Activated B cell treated with CpG ODN at 0.5 μM for 24 hours (primary cell): ENCODE measurements at regions of chr3 and their contacts with region 1.

Region 1: DNA sequence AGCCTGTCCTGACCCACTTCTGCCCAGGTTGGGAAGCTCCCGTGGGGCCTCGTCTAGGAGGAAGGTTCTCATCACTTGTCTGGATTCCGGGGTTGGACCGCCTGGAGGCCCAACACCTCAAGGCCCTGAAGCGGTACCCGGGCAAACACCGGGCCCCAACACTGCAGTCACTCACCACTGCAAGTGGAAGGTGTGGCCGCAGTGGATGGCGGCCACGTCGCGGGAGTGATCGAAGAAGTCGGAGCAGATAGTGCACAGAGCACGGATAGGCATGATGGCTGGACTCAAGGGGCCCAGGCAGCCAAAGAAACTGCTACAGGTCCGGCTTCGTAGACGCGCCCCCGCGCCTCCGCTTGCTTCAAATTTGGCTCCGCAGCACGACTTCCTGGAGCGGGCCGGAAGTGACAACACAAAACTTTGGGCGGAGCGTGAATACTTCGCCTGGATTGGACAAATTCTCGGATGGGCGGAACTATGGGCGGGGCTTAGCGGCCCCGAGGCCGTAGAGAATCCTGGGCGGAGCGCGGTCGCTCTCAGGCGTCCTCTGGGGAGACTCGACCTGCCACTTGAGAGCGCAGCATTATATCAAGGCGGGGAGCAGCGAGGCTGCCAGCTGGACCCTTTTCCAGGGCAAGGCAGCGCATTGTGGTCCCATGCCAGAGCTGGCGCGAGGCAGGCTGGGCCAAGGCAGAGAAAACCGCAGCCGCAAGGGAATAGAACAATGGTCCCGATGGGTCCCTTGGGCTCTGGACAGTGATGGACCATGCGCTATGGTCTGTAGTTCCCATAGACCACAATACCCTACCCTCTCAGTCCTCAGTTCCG is at the start of gene TRAIP:
- DNase-seq: peak; percentile 94
- ATAC-seq: peak; percentile 100
- H3K4me3 Mint-ChIP-seq: peak within 1 kb of the TSS; percentile 86
- H3K27ac Mint-ChIP-seq: peak within 1 kb of the TSS; percentile 80
- H3K4me1 Mint-ChIP-seq: peaks cover 15% of the 10 kb centered on the region
- H3K27me3 Mint-ChIP-seq: peaks cover 3% of the 10 kb centered on the region
- CTCF ChIP-seq: no peak
- total RNA-seq, gene TRAIP: 6.4 TPM in 2 replicates

Region 2: GRCh38 chr3:49786241-49786958 is 70.0 kb before region 1 on chr3 and contains the start of gene IP6K1:
- CTCF ChIA-PET with region 1: no interaction called
- POLR2A ChIA-PET with region 1: interaction called, 3 read pairs
- intact Hi-C with region 1: loop called (anchors 1 kb)
- DNase-seq: peak; percentile 97
- ATAC-seq: peak; percentile 99
- H3K4me3 Mint-ChIP-seq: peak within 1 kb of the TSS; percentile 91
- H3K27ac Mint-ChIP-seq: peak within 1 kb of the TSS; percentile 93
- H3K4me1 Mint-ChIP-seq: peaks cover 32% of the 10 kb centered on the region
- H3K27me3 Mint-ChIP-seq: no peaks in the 10 kb centered on the region
- CTCF ChIP-seq: no peak
- total RNA-seq, gene IP6K1: 44.3 and 47.6 TPM in 2 replicates

Region 3: GRCh38 chr3:49929331-49930240 is 73.2 kb after region 1 on chr3 and contains the start of gene MON1A:
- CTCF ChIA-PET with region 1: no interaction called
- POLR2A ChIA-PET with region 1: no interaction called
- intact Hi-C with region 1: loop called (anchors 2 kb)
- DNase-seq: peak; percentile 92
- ATAC-seq: peak; percentile 95
- H3K4me3 Mint-ChIP-seq: peak within 1 kb of the TSS; percentile 86
- H3K27ac Mint-ChIP-seq: peak within 1 kb of the TSS; percentile 79
- H3K4me1 Mint-ChIP-seq: peaks cover 16% of the 10 kb centered on the region
- H3K27me3 Mint-ChIP-seq: no peaks in the 10 kb centered on the region
- CTCF ChIP-seq: no peak
- total RNA-seq, gene MON1A: 6.3 and 7.1 TPM in 2 replicates

Region 4: DNA sequence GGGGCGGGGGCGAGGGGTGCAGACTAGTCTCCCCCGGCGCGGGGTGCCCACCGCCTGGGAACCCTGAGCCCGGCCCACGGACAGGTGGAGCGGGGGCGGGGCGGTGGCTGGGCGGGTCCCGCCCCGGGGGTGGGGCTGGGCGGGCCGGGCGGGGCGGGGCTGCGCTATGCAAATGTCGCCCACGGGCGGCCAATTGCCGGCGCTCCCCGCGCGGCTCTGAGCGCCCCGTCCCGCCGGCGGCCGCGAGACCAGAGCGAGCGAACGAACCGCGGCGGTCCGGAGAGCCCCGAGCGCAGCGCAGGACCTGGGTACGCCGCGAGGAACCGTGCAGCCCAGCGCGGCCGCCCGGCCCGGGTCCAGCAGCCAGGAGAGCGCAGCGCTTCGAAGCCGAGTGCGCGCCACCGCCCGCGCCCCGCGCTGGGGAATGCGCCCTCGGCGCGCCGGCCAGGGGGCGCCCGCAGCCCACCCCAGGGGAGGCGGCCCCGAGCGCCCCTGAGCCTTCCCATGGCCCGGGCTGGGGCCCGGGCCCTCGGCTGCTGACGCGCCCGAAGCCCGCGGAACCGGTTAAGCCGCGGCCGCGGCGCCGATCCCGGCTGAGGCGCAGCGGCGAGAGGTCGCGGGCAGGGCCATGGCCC is 298.6 kb after region 1 on chr3 and contains the start of gene SEMA3F:
- CTCF ChIA-PET with region 1: no interaction called
- POLR2A ChIA-PET with region 1: no interaction called
- intact Hi-C with region 1: loop called (anchors 1 kb)
- DNase-seq: peak; percentile 63
- ATAC-seq: peak; percentile 92
- H3K4me3 Mint-ChIP-seq: peak within 1 kb of the TSS; percentile 79
- H3K27ac Mint-ChIP-seq: no peak within 1 kb of the TSS
- H3K4me1 Mint-ChIP-seq: peaks cover 13% of the 10 kb centered on the region
- H3K27me3 Mint-ChIP-seq: peaks cover 34% of the 10 kb centered on the region
- CTCF ChIP-seq: no peak
- total RNA-seq, gene SEMA3F: 0.34 TPM in 1 of 2 replicates, not detected in the other